Right cardiac atrium (tissue), 5 donors: ENCODE measurements at regions of chr14 and their contacts with region 1.

Region 1: GRCh38 chr14:31326111-31326510 is 94.2 kb downstream of the HEATR5A start:
- DNase-seq: no peak
- ATAC-seq: no peak
- H3K4me3 ChIP-seq: no peak overlapping the region
- H3K27ac ChIP-seq: no peak overlapping the region
- H3K4me1 ChIP-seq: no peaks in the 10 kb centered on the region
- H3K27me3 ChIP-seq: no peaks in the 10 kb centered on the region

Region 2: GRCh38 chr14:31207755-31208545 is 118.2 kb before region 1 on chr14 and contains the start of gene HECTD1:
- intact Hi-C with region 1: loop called in 1 of 4 experiments (anchors 10 kb)
- DNase-seq: peak; percentile 92 to 97 (median 96)
- ATAC-seq: peak; percentile 96
- H3K4me3 ChIP-seq: peak within 1 kb of the TSS; percentile 91
- H3K27ac ChIP-seq: peak within 1 kb of the TSS; percentile 93
- H3K4me1 ChIP-seq: no peaks in the 10 kb centered on the region
- H3K27me3 ChIP-seq: no peaks in the 10 kb centered on the region
- total RNA-seq, gene HECTD1: 122 to 159 (median 141) TPM

Region 3: GRCh38 chr14:31360919-31361662 is 35.0 kb after region 1 on chr14:
- intact Hi-C with region 1: no loop called
- DNase-seq: no peak
- ATAC-seq: no peak
- H3K4me3 ChIP-seq: no peak overlapping the region
- H3K27ac ChIP-seq: no peak overlapping the region
- H3K4me1 ChIP-seq: no peaks in the 10 kb centered on the region
- H3K27me3 ChIP-seq: no peaks in the 10 kb centered on the region